Activated naive CD4-positive, alpha-beta T cell treated with anti-CD3 and anti-CD28 coated beads for 36 hours (primary cell): ENCODE measurements at regions of chr2 and their contacts with region 1.

Region 1: DNA sequence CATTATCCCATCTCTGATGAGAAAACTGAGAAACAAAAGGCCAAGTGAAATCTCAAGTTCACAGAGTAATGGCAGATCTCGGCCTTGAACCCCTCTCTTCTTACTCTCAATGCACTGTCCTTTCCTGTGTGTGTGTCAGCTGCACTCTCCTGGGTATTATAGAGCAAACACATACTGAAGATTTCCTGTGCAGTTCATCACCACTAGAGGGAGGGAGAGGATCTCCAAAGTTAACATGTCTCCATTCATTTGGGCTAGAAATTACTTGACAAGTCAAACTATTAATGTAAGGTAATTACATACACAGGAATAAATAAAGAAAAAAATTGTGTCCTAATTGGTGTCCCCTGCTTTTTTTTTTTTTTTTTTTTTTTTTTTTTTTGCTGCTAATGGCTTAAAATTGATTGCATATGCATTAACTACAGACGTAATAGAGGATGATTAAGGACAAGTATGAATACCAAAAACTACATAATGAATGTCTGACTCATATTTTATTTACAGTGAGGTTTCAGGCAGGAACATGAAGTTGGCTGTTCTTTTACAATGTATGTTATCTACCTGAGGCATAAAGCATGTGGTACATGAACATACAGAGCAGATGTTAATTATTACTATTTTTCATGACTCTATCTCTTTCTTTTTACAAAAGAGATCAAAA is 269.2 kb downstream of the NYAP2 start:
- DNase-seq: peak; percentile 14
- H3K4me3 Mint-ChIP-seq: no peak overlapping the region
- H3K27ac Mint-ChIP-seq: no peak overlapping the region
- H3K4me1 Mint-ChIP-seq: no peaks in the 10 kb centered on the region
- H3K27me3 Mint-ChIP-seq: peaks cover 5% of the 10 kb centered on the region

Region 2: GRCh38 chr2:225889446-225889850 is 220.7 kb after region 1 on chr2:
- CTCF ChIA-PET with region 1: no interaction called
- intact Hi-C with region 1: loop called (anchors 5 kb)
- DNase-seq: no peak
- H3K4me3 Mint-ChIP-seq: no peak overlapping the region
- H3K27ac Mint-ChIP-seq: no peak overlapping the region
- H3K4me1 Mint-ChIP-seq: no peaks in the 10 kb centered on the region
- H3K27me3 Mint-ChIP-seq: peaks cover 14% of the 10 kb centered on the region

Region 3: DNA sequence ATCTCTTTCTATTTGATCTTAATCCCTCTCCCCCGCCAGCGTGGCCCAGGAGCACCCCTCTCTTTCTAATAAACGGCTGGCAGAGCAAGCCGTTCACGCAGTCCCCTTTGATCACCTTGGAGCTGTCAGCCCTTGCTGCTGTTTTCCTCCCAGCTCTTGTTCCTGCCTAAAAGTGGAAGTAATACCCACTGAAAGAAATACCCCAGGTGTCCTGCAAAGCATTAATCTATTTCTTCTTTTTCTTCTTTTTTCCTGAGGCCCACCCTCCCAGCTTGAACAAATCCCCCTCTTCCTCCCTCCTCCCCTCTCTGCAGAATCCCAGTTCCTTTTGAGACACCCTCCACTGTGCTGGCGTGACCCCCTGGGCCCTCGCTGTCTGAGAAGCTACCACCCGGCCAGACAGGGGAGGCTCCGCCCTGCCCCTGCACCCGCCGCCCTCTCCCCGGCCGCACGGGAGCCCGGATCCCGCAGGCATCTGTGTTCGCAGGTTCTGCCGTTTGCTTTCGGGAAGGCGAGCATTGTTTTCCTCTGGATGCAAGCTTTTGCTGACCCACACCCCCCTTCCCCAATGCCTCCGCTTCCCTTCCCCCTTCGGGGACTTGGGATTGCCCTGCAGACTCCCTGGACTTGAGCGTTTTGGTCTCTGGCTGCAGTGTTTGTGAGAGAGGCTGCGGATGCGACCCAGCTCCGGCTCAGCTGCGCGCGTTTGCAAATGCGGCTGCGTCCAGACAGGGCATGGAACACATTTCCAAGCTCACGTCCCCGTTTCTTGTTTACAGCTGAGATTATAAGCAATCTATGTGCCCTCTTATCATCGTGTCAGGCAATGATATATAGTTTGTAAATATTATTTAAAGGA is 362.3 kb after region 1 on chr2:
- CTCF ChIA-PET with region 1: no interaction called
- intact Hi-C with region 1: loop called (anchors 10 kb)
- DNase-seq: peak; percentile 10
- H3K4me3 Mint-ChIP-seq: peak overlapping the region; percentile 71
- H3K27ac Mint-ChIP-seq: no peak overlapping the region
- H3K4me1 Mint-ChIP-seq: peaks cover 20% of the 10 kb centered on the region
- H3K27me3 Mint-ChIP-seq: peaks cover 46% of the 10 kb centered on the region

Region 4: GRCh38 chr2:226215902-226216503 is 547.3 kb after region 1 on chr2:
- CTCF ChIA-PET with region 1: no interaction called
- intact Hi-C with region 1: loop called (anchors 5 kb)
- DNase-seq: peak; percentile 80
- H3K4me3 Mint-ChIP-seq: no peak overlapping the region
- H3K27ac Mint-ChIP-seq: no peak overlapping the region
- H3K4me1 Mint-ChIP-seq: no peaks in the 10 kb centered on the region
- H3K27me3 Mint-ChIP-seq: no peaks in the 10 kb centered on the region

Region 5: DNA sequence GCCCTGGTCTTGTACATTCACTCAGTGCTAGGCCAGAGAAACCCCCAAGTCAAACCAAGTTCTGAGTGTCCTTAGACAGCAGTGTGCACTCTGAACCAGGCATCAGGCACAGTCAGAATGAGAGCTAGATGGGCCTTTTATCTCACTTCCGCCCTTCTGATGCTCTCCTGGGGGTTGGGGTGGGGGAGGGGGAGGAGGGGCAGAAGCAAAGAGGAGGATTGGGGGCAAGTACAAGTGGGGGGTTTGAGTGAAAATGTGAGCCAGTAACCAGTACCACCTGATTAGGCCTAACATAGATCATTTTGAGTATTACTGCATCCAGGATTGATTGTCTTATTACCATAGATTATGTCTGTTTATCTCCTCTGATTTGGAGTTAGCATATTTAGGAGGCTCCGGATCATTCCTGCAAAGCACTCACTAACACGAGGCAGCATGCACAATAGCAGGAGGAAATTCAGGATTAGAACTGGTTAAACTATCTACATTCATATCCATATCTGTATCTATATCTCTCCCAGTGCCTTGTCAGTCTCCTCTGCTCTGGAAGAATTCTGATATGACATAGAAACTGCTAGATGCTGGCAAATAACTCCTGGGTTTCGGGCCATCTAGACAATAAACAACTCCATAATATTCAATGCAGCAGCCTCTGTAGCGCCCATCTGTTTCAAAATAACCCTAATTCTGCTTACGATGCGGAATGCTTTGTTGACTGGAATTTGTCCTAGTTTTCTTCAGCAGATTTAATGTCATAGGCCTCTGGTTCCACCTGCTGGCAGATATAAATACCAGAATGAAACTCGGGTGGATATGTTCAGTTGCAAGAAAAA is 1316.2 kb after region 1 on chr2:
- CTCF ChIA-PET with region 1: no interaction called
- intact Hi-C with region 1: loop called (anchors 1 kb)
- DNase-seq: peak; percentile 45
- H3K4me3 Mint-ChIP-seq: no peak overlapping the region
- H3K27ac Mint-ChIP-seq: no peak overlapping the region
- H3K4me1 Mint-ChIP-seq: peaks cover 19% of the 10 kb centered on the region
- H3K27me3 Mint-ChIP-seq: no peaks in the 10 kb centered on the region

Region 6: GRCh38 chr2:227033471-227034148 is 1364.9 kb after region 1 on chr2:
- CTCF ChIA-PET with region 1: no interaction called
- intact Hi-C with region 1: loop called (anchors 2 kb)
- DNase-seq: peak; percentile 36
- H3K4me3 Mint-ChIP-seq: no peak overlapping the region
- H3K27ac Mint-ChIP-seq: no peak overlapping the region
- H3K4me1 Mint-ChIP-seq: no peaks in the 10 kb centered on the region
- H3K27me3 Mint-ChIP-seq: peaks cover 18% of the 10 kb centered on the region

Region 7: DNA sequence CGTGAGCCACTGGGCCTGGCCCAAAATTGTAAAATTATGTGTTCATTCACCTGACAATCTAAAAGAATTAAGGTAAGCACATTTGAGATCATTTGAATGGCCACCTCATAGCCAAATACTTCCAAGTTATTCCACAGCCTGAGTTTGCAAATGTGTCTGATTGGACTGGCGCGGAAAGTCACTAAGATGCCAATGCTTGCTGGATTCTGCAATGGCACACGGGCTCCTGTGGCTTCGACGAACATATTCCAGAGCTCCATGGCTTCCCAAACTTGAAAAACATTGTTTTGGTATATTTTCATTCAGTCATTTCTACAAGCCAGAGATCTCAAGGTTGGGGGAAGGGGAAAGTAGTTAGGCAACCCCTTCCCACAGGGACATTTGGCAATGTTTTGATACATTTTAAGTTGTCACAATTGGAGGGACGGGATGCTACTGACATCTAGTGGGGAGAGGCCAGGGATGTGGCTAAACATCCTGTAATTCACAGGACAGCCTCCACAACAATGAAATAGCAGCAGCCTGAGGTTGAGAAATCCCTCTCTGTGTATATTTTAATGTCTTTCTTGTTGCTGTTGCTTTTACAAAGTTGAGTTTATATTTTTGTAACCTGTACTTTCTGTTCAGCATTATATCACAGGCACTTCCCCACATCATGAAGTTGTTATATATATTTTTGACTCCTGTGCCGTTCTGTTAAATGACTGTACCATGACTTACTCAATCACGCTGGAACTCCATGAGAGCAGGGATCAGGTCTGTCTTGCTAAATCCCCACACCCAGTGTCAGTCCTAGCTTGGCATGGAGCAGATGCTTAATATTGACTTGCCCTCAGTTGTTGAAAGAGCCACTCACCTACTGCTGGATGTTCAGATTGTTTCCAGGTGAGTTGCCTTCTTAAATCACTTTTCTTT is 1438.4 kb after region 1 on chr2:
- CTCF ChIA-PET with region 1: interaction called, 3 read pairs
- intact Hi-C with region 1: loop called (anchors 1 kb)
- DNase-seq: peak; percentile 73
- H3K4me3 Mint-ChIP-seq: no peak overlapping the region
- H3K27ac Mint-ChIP-seq: no peak overlapping the region
- H3K4me1 Mint-ChIP-seq: no peaks in the 10 kb centered on the region
- H3K27me3 Mint-ChIP-seq: no peaks in the 10 kb centered on the region